Activated naive CD4-positive, alpha-beta T cell treated with anti-CD3 and anti-CD28 coated beads for 36 hours (primary cell): ENCODE measurements at regions of chr11 and their contacts with region 1.

Region 1: GRCh38 chr11:47847892-47848635 is at the start of gene NUP160:
- DNase-seq: peak; percentile 92
- H3K4me3 Mint-ChIP-seq: peak within 1 kb of the TSS; percentile 93
- H3K27ac Mint-ChIP-seq: peak within 1 kb of the TSS; percentile 92
- H3K4me1 Mint-ChIP-seq: peaks cover 47% of the 10 kb centered on the region
- H3K27me3 Mint-ChIP-seq: no peaks in the 10 kb centered on the region
- total RNA-seq, gene NUP160: 64.7 to 64.8 TPM

Region 2: DNA sequence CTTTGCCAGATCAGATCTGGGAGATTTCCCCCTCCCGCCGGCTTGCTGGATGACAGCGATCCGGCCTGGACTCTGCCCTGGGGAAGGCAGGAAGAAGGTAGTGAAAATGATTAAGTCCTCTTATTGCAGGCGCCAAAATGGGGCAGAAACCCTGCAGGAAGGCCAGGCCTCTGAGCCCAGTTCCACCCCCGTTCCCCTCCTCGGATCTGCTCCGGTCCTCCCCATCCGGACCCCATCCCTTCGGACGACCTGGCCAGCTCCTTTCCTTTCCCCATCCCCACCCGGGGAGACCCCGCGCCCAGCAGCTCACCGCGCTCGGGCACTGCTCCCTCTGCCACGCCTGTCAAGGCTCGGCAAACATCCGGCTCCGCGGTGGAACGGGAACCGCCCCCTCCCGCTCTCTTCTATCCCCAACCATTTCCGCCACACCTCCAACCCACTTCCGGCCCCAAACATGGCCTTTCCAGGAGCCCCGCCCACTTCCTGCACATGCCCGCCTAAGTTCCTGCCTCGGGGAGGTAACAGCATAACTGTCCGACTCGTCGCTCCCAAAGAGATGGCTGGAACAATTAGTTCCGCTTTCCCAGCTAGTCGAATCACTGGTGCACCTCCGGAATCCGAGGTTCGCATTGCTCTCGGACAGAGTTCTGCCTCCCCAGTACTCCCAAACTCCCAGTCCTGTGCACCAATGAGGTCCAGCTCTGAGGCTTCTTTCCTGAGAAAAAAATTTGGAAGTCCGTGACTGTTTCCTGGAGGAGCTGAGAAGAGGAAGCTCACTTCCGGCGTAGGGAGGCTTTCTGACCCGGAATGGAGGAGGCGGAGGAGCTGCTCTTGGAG is 1147.6 kb before region 1 on chr11 and contains the starts of genes ARHGAP1 and ZNF408:
- CTCF ChIA-PET with region 1: no interaction called
- intact Hi-C with region 1: loop called (anchors 1 kb)
- DNase-seq: peak; percentile 100
- H3K4me3 Mint-ChIP-seq: peak within 1 kb of the TSS; percentile 97
- H3K27ac Mint-ChIP-seq: peak within 1 kb of the TSS; percentile 97
- H3K4me1 Mint-ChIP-seq: peaks cover 45% of the 10 kb centered on the region
- H3K27me3 Mint-ChIP-seq: no peaks in the 10 kb centered on the region
- total RNA-seq, gene ARHGAP1: 31.2 to 32.6 TPM
- total RNA-seq, gene ZNF408: 7.3 to 7.6 TPM

Region 3: GRCh38 chr11:47426061-47426956 is 421.8 kb before region 1 on chr11 and contains the start of gene PSMC3:
- CTCF ChIA-PET with region 1: no interaction called
- intact Hi-C with region 1: loop called (anchors 1 kb)
- DNase-seq: peak; percentile 99
- H3K4me3 Mint-ChIP-seq: peak within 1 kb of the TSS; percentile 98
- H3K27ac Mint-ChIP-seq: peak within 1 kb of the TSS; percentile 98
- H3K4me1 Mint-ChIP-seq: peaks cover 26% of the 10 kb centered on the region
- H3K27me3 Mint-ChIP-seq: no peaks in the 10 kb centered on the region
- total RNA-seq, gene PSMC3: 127 to 129 TPM

Region 4: GRCh38 chr11:47578524-47579460 is 269.3 kb before region 1 on chr11 and contains the starts of genes KBTBD4 and NDUFS3:
- CTCF ChIA-PET with region 1: no interaction called
- intact Hi-C with region 1: loop called (anchors 2 kb)
- DNase-seq: peak; percentile 90
- H3K4me3 Mint-ChIP-seq: peak within 1 kb of the TSS; percentile 97
- H3K27ac Mint-ChIP-seq: peak within 1 kb of the TSS; percentile 97
- H3K4me1 Mint-ChIP-seq: peaks cover 44% of the 10 kb centered on the region
- H3K27me3 Mint-ChIP-seq: no peaks in the 10 kb centered on the region
- total RNA-seq, gene KBTBD4: 13.8 to 15.4 TPM
- total RNA-seq, gene NDUFS3: 123 to 124 TPM

Region 5: DNA sequence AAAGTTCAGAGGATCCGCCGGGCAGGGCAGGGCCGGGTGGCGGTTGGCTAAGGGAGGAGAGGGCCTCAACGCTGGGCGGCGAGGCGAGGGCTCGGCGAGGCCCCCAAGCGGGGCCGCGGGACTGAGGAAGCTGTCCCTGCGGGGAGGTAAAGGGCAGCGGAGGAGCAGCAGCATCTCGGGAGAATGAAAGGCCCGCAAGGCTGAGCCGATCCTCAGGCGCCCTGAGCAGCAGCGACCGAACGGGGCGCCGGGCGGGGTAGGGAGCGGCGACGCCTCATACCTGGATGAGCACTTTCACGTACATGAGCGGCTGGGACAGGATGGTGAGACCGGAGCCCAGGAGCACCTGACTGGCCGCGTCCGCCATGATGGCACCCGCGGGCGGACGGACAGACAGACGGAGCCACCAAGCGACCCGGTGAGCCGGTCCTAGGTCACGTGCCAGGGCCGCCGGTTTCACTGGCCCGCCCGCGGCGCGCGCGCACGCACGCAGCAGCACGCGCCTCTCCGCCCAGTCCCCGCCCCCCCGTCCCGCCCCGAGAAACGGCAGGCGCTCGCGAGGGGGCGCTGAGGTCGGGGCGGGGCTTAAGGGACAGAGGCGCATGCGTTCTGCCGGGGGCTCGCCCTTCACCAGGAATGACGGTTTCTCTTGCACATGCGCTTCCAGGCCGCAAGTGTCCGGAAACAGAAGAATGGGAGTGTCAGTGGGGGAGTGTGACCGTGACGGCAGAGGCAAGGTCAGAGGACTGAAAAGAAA is 205.8 kb before region 1 on chr11 and contains the start of gene MTCH2:
- CTCF ChIA-PET with region 1: no interaction called
- intact Hi-C with region 1: loop called (anchors 1 kb)
- DNase-seq: peak; percentile 97
- H3K4me3 Mint-ChIP-seq: peak within 1 kb of the TSS; percentile 91
- H3K27ac Mint-ChIP-seq: peak within 1 kb of the TSS; percentile 81
- H3K4me1 Mint-ChIP-seq: peaks cover 19% of the 10 kb centered on the region
- H3K27me3 Mint-ChIP-seq: no peaks in the 10 kb centered on the region
- total RNA-seq, gene MTCH2: 93.7 to 95.1 TPM

Region 6: DNA sequence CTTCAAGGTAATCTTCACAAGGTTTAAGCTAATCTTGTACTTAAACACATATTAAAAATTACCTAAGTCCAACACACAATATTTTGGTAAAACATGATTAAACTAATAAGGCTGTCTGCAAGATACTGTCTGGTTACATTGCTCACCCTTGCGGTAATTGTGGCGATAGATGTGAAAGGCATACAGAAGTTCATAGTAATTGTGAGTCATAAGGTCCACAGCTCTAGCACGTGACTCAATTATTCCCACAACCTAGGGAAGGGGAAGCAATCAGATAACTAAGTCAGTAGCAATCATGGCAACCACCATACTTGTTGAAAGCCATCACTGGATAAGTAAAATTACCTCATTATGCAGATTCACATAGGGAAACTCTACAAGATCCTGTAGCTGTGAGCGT is 50.4 kb before region 1 on chr11:
- CTCF ChIA-PET with region 1: no interaction called
- intact Hi-C with region 1: loop called (anchors 5 kb)
- DNase-seq: peak; percentile 80
- H3K4me3 Mint-ChIP-seq: no peak overlapping the region
- H3K27ac Mint-ChIP-seq: peak overlapping the region; percentile 84
- H3K4me1 Mint-ChIP-seq: peaks cover 12% of the 10 kb centered on the region
- H3K27me3 Mint-ChIP-seq: no peaks in the 10 kb centered on the region

Region 7: DNA sequence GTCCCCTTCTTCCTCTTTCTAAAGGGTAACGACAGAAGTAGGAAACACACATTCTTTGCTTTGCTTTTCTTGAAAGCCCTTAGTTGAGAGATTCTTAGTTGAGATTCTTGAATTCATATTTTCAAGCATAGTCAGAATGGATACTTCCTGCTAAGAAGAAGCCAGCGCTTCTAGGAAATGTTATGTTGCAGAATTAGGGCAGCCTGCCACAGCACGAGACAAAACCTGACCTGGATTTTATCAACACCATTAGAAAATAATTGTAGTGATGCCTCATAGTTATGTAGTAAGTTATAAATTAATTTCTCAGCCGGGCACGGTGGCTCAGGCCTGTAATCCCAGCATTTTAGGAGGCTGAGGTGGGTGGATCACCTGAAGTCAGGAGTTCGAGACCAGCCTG is 38.0 kb after region 1 on chr11:
- CTCF ChIA-PET with region 1: no interaction called
- intact Hi-C with region 1: loop called (anchors 1 kb)
- DNase-seq: peak; percentile 52
- H3K4me3 Mint-ChIP-seq: no peak overlapping the region
- H3K27ac Mint-ChIP-seq: peak overlapping the region; percentile 75
- H3K4me1 Mint-ChIP-seq: peaks cover 51% of the 10 kb centered on the region
- H3K27me3 Mint-ChIP-seq: no peaks in the 10 kb centered on the region